Heart left ventricle (tissue), 16 donors: ENCODE measurements at regions of chr16 and their contacts with region 1.

Region 1: DNA sequence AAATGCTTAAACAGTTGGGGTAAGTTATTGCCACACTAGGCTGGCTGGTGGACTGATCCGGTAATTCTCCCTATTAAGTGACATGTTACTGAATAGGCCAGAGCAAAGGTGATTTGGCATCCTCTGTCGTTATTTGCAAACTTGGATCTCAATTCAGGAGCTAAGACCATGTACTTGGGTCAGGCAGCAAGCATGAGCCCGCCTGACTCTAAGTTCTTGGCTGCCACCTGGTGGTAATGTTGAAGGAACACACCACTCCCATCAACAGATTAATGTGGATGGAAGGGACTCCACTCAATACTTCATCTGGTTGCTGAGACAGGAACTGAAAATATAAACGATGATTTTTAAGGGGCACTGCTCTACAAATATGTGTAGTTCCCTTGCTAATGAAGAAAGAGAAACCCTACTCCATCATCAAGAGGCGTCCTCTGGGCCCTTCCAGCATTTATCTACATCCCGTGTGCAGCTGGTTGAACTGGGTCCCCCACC is 70.8 kb downstream of the EMP2 start:
- DNase-seq: peak in 4 of 5 donors; percentile 49 to 71 (median 60)
- ATAC-seq: peak; percentile 84 to 91 (median 90)
- H3K4me3 ChIP-seq: no peak overlapping the region
- H3K27ac ChIP-seq: no peak overlapping the region
- H3K4me1 ChIP-seq: peaks cover 0 to 8% (median 5%) of the 10 kb centered on the region in 12 donors
- H3K27me3 ChIP-seq: no peaks in the 10 kb centered on the region
- CTCF ChIP-seq: peak; percentile 72 to 93 (median 84)
- POLR2A ChIP-seq: no peak

Region 2: DNA sequence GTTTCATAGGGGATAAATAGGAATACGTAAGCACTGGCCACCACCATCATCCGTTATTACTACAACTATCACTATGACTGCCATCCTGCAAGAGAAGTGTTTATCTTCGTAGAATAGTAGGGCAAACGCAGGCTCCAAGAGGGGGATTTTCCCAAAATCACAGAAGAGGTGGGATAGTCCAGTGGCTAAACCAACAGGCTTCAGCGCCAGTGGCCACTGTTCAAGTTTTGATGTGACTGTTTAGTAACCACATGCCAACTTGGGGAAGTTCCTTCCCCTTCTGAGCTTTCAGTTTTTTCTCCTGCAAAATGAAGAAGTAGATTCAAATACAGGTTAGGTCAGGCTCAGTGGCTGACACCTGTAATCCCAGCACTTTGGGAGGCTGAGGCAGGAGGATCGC is 266.7 kb before region 1 on chr16:
- intact Hi-C with region 1: no loop called
- DNase-seq: no peak
- ATAC-seq: no peak
- H3K4me3 ChIP-seq: no peak overlapping the region
- H3K27ac ChIP-seq: no peak overlapping the region
- H3K4me1 ChIP-seq: no peaks in the 10 kb centered on the region
- H3K27me3 ChIP-seq: peaks cover 0 to 29% (median 0%) of the 10 kb centered on the region in 9 donors
- CTCF ChIP-seq: no peak
- POLR2A ChIP-seq: no peak

Region 3: GRCh38 chr16:10256784-10257641 is 252.6 kb before region 1 on chr16:
- intact Hi-C with region 1: loop called (anchors 1 to 5 kb)
- DNase-seq: peak in 2 of 5 donors; percentile 25 to 27
- ATAC-seq: peak in 2 of 4 donors; percentile 58 to 76
- H3K4me3 ChIP-seq: no peak overlapping the region
- H3K27ac ChIP-seq: no peak overlapping the region
- H3K4me1 ChIP-seq: peaks cover 0 to 11% (median 0%) of the 10 kb centered on the region in 12 donors
- H3K27me3 ChIP-seq: peaks cover 0 to 15% (median 0%) of the 10 kb centered on the region in 9 donors
- CTCF ChIP-seq: peak; percentile 59 to 84 (median 73)
- POLR2A ChIP-seq: no peak

Region 4: DNA sequence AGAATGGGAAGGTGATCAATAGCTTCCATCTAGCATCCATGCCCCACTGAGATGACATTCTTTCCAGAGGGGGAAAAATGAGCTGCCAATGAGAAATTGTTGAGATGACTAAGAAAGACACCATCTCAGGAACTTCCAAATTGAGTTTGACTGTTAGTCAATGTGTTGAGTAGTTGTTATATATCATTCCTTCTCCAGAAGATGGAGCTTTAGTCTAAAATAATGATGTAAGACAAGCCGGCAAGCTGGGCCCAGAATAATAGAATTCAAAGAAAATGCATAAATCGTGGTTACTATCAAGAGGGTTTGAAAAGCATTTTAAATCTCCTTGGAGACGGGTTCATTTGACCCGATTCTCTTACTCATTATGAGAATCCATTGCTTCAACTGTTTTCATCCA is 194.8 kb before region 1 on chr16:
- intact Hi-C with region 1: loop called (anchors 1 to 5 kb)
- DNase-seq: no peak
- ATAC-seq: no peak
- H3K4me3 ChIP-seq: no peak overlapping the region
- H3K27ac ChIP-seq: no peak overlapping the region
- H3K4me1 ChIP-seq: no peaks in the 10 kb centered on the region
- H3K27me3 ChIP-seq: no peaks in the 10 kb centered on the region
- CTCF ChIP-seq: peak in 9 of 12 donors; percentile 12 to 55 (median 41)
- POLR2A ChIP-seq: no peak

Region 5: GRCh38 chr16:10385725-10386516 is 123.7 kb before region 1 on chr16 and contains the start of gene ATF7IP2:
- intact Hi-C with region 1: loop called in 1 of 10 experiments (anchors 5 kb)
- DNase-seq: peak; percentile 92 to 96 (median 95)
- ATAC-seq: peak; percentile 98 to 100 (median 99)
- H3K4me3 ChIP-seq: peak within 1 kb of the TSS; percentile 40 to 88 (median 78)
- H3K27ac ChIP-seq: peak within 1 kb of the TSS; percentile 63 to 91 (median 88)
- H3K4me1 ChIP-seq: peaks cover 0 to 21% (median 9%) of the 10 kb centered on the region in 12 donors
- H3K27me3 ChIP-seq: no peaks in the 10 kb centered on the region
- CTCF ChIP-seq: no peak
- POLR2A ChIP-seq: peak; percentile 61 to 91
- total RNA-seq, gene ATF7IP2: 34.4 to 51.8 (median 43.2) TPM

Region 6: DNA sequence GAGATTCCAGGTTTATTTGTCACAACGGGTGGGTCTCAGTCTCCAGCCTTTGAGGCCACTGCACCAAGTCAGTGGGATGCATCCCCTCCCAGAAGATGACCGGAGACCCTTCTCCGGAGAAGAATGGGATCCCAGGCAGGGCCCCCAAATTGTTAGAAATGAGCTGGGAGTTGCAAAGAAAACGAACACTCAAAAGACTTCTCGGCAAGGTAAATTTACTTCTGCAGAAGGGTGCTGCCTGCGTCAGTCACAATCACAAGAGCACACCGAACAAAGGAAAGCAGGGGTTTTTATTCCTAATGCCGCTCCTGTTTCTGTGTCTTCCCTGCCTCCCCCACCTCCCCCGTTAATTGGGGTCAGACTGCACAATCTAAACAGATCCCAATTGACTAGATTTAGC is 62.3 kb before region 1 on chr16:
- intact Hi-C with region 1: loop called in 1 of 10 experiments (anchors 10 kb)
- DNase-seq: no peak
- ATAC-seq: no peak
- H3K4me3 ChIP-seq: no peak overlapping the region
- H3K27ac ChIP-seq: no peak overlapping the region
- H3K4me1 ChIP-seq: no peaks in the 10 kb centered on the region
- H3K27me3 ChIP-seq: no peaks in the 10 kb centered on the region
- CTCF ChIP-seq: no peak
- POLR2A ChIP-seq: no peak

Region 7: DNA sequence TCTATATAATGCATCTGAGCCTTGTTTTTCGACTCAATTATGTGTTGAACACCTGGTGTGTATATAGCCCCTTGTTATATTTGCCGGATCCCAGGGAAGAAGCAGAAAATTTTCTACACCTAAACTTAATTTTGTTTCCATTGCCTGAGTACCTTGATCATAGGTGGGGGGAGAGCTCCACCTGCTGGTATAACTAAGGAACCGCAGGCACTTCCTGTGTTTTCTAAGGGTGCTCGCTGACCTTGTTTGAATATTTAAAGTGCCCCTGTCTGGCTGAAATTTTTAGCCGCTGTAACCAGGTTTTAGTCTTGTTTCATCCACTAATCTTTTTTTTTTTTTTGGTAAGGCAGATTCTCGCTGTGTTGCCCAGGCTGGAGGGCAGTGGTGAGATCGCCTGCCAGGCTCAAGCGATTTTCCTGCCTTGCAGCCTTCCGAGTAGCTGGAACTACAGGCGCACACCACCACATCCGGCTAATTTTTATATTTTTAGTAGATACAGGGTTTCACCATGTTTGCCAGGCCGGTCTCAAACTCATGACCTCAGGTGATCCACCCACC is 227.6 kb after region 1 on chr16:
- intact Hi-C with region 1: loop called in 5 of 10 experiments (anchors 1 to 2 kb)
- DNase-seq: peak in 4 of 5 donors; percentile 44 to 68 (median 63)
- ATAC-seq: peak; percentile 19 to 63 (median 55)
- H3K4me3 ChIP-seq: peak overlapping the region in 6 of 12 donors; percentile 2 to 22 (median 10)
- H3K27ac ChIP-seq: peak overlapping the region in 11 of 12 donors; percentile 68 to 94 (median 85)
- H3K4me1 ChIP-seq: peaks cover 5 to 24% (median 18%) of the 10 kb centered on the region in 12 donors
- H3K27me3 ChIP-seq: no peaks in the 10 kb centered on the region
- CTCF ChIP-seq: peak; percentile 88 to 96 (median 94)
- POLR2A ChIP-seq: no peak

Region 8: DNA sequence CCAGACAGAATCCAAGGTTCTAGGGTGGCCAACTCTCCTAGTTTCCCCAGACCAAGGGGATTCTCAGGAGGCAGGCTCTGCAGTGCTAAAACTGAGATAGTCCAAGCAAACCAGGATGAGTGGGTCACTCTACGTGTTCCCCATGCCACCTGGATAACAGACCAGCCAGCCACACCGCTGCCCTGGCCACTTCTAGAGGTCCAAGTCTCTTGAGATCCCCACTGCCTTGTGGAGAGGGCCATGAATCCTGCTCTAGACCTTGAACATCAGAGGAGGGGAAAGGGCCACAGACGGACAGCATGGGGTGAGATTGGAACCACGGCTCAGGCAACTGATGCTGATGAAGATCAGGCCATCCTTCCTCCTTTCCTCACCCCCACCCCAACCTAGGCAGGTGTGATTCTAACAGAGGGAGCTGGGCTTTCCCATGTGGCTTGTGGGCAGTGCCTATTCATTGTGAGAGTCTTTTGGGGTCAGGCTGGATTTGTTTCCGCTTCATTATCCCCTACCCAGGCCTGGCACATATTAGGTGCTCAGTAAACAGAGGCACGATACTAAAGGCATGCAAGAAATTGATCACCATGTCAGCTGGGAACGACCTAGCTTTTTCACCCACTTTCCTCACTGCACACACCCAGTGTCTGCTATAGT is 325.8 kb after region 1 on chr16:
- intact Hi-C with region 1: loop called in 1 of 10 experiments (anchors 5 kb)
- DNase-seq: no peak
- ATAC-seq: no peak
- H3K4me3 ChIP-seq: no peak overlapping the region
- H3K27ac ChIP-seq: no peak overlapping the region
- H3K4me1 ChIP-seq: peaks cover 0 to 13% (median 3%) of the 10 kb centered on the region in 12 donors
- H3K27me3 ChIP-seq: no peaks in the 10 kb centered on the region
- CTCF ChIP-seq: no peak
- POLR2A ChIP-seq: no peak